Posterior vena cava (tissue), 2 donors: ENCODE measurements at regions of chr6 and their contacts with region 1.

Region 1: GRCh38 chr6:90478789-90479602 is 107.9 kb downstream of the MAP3K7 start:
- DNase-seq: peak; percentile 95

Region 2: GRCh38 chr6:89787660-89788328 is 691.2 kb before region 1 on chr6:
- intact Hi-C with region 1: no loop called
- DNase-seq: no peak

Region 3: DNA sequence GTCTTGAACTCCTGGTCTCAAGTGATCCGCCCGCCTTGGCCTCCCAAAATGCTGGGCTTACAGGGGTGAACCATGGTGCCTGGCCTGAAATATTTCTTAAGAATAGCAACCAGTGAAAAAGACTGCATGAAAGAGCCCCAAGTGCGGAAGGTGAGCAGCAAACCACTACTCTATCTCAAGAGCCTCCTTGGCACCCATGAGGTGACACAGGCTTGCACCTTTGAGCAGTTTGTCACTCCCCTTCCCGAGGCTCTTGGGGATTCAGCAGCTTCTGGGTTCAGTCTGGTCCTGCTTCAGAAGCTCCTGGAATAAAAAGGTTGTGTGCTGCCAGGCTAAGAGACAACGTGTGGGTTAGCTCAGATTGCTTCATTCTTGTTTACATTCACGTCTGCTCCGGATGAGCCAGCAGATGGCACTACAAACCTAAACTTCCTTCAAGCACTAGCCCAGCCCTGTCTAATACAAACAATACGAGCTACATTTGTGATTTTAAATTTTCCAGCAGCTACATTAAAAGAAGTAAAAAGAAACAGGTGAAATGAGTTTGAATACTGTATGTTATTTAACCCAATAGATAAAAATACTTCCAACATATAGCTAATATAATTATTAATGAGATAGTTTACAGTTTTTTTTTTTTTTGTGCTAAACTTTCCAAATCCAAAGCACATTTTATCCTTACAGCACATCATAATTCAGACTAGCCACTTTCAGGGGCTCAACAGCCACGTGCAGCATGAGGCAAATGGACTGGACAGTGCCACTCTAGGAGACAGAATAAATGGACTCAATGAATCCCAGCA is 538.6 kb before region 1 on chr6:
- intact Hi-C with region 1: loop called (anchors 2 to 10 kb)
- DNase-seq: no peak

Region 4: DNA sequence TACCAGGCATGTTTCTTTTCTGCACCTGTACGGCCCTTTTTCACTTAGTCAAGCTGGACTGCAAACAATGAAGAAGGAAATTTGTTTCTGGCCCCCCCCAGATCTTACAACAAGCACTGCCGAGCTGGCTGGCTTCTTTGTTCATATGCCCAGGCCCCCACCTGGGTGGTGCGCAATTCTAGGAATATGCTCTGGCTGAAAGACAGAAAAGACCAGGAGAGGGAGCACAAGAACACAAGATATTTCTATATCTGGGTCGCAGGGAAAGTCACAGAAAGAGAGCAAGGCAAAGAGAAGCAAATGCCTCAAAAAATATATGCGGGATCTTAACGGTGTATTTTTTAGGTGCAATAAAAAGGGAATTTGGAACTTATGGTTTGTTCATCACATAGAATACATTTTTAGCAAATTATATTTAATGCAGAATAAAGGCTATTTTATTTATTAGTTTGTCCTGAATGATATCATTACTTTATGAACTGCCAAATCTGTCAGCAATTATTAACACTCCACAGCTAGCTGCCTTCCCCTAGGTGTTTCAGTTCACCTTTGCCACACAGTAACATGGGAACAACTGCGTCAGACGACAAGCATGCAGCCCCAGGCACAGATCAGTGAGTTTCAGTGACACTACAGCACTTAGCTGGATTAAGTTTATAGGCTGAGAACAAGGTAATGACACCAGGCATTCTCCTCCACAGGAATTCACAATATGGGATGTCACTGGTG is 508.2 kb before region 1 on chr6:
- intact Hi-C with region 1: loop called in 1 of 2 experiments (anchors 10 kb)
- DNase-seq: no peak

Region 5: GRCh38 chr6:90230548-90231215 is 248.3 kb before region 1 on chr6:
- intact Hi-C with region 1: loop called in 1 of 2 experiments (anchors 10 kb)
- DNase-seq: no peak

Region 6: DNA sequence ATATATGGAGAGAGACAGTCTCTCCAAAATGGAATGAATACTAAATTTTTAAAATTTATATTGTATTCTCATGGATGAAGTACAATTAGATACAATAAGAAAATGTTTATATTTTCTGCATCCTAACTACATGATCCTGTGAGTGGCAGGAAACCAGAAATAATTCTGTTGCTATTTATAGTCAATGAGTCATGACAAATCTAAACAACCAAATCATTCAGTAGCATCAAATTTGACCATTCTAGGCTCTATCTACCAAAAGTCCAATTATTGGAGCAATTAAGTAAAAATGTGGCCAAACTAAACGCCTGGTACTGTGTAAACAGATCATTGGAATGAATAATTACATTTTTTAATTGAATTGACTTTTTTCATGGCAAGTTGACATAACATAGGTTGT is 1980.6 kb after region 1 on chr6:
- intact Hi-C with region 1: loop called in 1 of 2 experiments (anchors 5 kb)
- DNase-seq: no peak